Calu3 (cell line): ENCODE measurements at regions of chr5 and their contacts with region 1.

Region 1: GRCh38 chr5:31427013-31427723 is 104.7 kb downstream of the DROSHA start:
- DNase-seq: no peak
- H3K4me3 Mint-ChIP-seq: no peak overlapping the region
- H3K27ac Mint-ChIP-seq: no peak overlapping the region
- H3K4me1 Mint-ChIP-seq: peaks cover 10% of the 10 kb centered on the region
- H3K27me3 Mint-ChIP-seq: no peaks in the 10 kb centered on the region
- CTCF ChIP-seq: no peak

Region 2: GRCh38 chr5:31443572-31443971 is 16.4 kb after region 1 on chr5:
- CTCF ChIA-PET with region 1: no interaction called
- intact Hi-C with region 1: loop called (anchors 1 kb)
- DNase-seq: no peak
- H3K4me3 Mint-ChIP-seq: no peak overlapping the region
- H3K27ac Mint-ChIP-seq: no peak overlapping the region
- H3K4me1 Mint-ChIP-seq: no peaks in the 10 kb centered on the region
- H3K27me3 Mint-ChIP-seq: no peaks in the 10 kb centered on the region
- CTCF ChIP-seq: no peak

Region 3: DNA sequence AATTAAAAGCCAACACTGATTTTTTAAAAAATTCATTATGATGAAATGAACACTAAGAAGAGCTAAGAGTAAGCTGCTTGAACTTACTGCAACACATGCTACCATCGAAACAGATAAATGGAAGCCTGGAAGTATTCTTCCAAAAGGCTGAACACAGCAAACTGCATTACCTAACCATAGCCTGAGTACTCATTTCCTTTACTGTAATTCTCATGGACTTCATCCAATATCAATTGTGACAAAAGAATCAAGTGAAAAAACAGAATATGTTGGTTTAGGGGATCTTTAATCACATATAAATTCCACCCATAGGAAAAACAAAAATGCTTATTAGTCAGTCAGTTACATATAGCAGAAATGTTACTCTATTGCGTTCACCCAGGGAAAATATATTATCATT is 36.2 kb after region 1 on chr5:
- CTCF ChIA-PET with region 1: no interaction called
- intact Hi-C with region 1: no loop called
- DNase-seq: no peak
- H3K4me3 Mint-ChIP-seq: no peak overlapping the region
- H3K27ac Mint-ChIP-seq: no peak overlapping the region
- H3K4me1 Mint-ChIP-seq: no peaks in the 10 kb centered on the region
- H3K27me3 Mint-ChIP-seq: no peaks in the 10 kb centered on the region
- CTCF ChIP-seq: no peak